Activated CD8-positive, alpha-beta T cell treated with anti-CD3 and anti-CD28 coated beads for 36 hours (primary cell): ENCODE measurements at regions of chr16 and their contacts with region 1.

Region 1: GRCh38 chr16:89350701-89351380 is 133.3 kb downstream of the ZNF778 start:
- DNase-seq: peak; percentile 81
- ATAC-seq: peak; percentile 81
- H3K4me3 Mint-ChIP-seq: no peak overlapping the region
- H3K27ac Mint-ChIP-seq: peak overlapping the region; percentile 89
- H3K4me1 Mint-ChIP-seq: peaks cover 86% of the 10 kb centered on the region
- H3K27me3 Mint-ChIP-seq: no peaks in the 10 kb centered on the region
- CTCF ChIP-seq: no peak

Region 2: DNA sequence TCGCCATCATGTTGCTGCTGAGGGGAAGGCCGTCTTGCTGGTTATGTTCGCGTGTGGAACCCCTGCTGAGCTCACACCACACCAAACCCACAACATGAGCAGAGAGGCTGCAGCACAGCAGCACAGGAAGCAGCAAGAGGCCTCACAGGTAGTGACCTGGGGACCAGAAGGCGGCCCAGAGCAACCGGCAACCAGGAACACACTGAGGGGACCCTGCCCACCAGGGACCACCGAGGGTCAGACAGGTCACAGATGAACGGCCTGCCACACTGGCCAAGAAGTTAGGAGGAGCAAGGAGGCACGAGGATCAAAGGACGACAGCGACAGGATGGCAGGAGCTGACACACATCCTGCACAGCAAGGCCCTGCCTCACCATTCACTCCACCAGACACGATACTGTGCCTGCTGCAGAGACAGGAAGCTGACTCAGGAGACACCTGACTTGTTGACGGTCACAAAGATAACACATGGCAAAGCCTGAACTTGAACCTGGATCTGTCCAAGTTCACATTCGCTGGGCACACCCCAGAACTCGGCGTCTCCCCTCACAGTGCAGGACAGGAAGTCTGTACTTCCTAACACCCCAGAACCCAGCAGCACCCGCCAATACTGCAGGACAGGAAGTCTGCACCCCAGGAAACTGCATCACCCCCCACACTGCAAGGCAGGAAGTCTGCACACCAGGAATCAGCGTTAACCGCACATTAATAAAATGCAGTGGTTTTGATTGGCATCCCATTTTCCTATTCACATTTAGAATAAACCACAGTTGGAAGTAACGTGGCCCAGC is 34.9 kb before region 1 on chr16:
- CTCF ChIA-PET with region 1: interaction called, 3 read pairs
- POLR2A ChIA-PET with region 1: interaction called, 13 read pairs
- intact Hi-C with region 1: no loop called
- DNase-seq: peak; percentile 87
- ATAC-seq: peak; percentile 88
- H3K4me3 Mint-ChIP-seq: peak overlapping the region; percentile 50
- H3K27ac Mint-ChIP-seq: peak overlapping the region; percentile 96
- H3K4me1 Mint-ChIP-seq: peaks cover 87% of the 10 kb centered on the region
- H3K27me3 Mint-ChIP-seq: no peaks in the 10 kb centered on the region
- CTCF ChIP-seq: no peak

Region 3: DNA sequence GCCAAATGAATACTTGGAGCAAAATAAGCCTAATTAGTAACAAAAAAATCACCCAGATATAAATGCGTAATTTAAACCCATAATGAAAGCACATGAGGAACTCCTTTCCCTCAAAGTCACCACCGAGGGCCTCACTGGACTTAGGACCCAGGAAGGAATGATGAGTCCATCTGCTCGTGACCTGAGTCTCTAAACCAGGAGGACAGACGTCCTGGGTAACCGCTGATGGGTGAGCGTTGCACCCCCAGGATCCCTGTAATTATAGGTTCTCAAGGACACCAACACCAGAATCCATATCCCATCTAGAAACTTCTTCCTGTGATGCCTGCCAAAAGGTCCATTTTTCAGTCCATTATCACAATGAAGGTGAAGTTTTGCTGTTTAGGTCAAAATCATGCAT is 12.0 kb before region 1 on chr16:
- CTCF ChIA-PET with region 1: no interaction called
- POLR2A ChIA-PET with region 1: no interaction called
- intact Hi-C with region 1: no loop called
- DNase-seq: no peak
- ATAC-seq: no peak
- H3K4me3 Mint-ChIP-seq: no peak overlapping the region
- H3K27ac Mint-ChIP-seq: no peak overlapping the region
- H3K4me1 Mint-ChIP-seq: peaks cover 75% of the 10 kb centered on the region
- H3K27me3 Mint-ChIP-seq: no peaks in the 10 kb centered on the region
- CTCF ChIP-seq: no peak

Region 4: DNA sequence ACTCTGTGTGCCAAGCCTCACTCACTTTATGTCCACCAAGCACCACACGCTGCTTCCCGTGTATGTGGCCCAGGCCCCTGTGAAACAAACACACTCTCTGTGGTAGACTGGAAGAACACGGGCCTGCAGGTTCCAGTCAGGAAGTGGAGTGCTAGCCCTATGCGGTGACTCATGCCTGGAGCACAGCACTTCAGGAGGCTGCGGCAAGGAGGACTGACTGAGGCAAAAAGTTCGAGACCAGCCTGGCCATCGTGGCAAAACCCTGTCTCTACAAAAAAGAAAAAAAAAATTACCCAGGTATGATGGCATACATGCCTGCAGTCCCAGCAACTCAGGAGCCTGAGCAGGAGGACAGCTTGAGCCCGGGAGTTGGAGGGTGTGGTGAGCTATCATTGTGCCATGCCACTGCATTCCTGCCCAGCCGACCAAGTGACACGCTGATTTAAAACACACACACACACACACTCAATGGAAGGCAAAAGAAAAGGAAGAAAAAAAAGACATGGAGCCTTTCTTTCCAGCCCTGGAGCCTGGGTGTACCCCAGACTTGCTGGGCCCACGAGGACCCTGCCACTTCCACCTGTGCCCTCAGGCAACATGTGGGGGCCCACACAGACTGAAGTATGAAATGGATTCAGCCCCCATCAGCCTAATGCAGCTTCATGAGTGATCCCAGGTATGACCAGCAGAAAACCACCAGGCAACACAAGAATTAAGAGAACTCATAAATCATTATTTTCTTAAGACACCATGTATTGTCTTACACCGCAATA is 13.0 kb after region 1 on chr16:
- CTCF ChIA-PET with region 1: interaction called, 12 read pairs
- POLR2A ChIA-PET with region 1: interaction called, 10 read pairs
- intact Hi-C with region 1: no loop called
- DNase-seq: peak; percentile 64
- ATAC-seq: peak; percentile 12
- H3K4me3 Mint-ChIP-seq: no peak overlapping the region
- H3K27ac Mint-ChIP-seq: peak overlapping the region; percentile 83
- H3K4me1 Mint-ChIP-seq: peaks cover 87% of the 10 kb centered on the region
- H3K27me3 Mint-ChIP-seq: no peaks in the 10 kb centered on the region
- CTCF ChIP-seq: no peak